K562 (cell line): ENCODE measurements at regions of chr15 and their contacts with region 1.

Region 1: DNA sequence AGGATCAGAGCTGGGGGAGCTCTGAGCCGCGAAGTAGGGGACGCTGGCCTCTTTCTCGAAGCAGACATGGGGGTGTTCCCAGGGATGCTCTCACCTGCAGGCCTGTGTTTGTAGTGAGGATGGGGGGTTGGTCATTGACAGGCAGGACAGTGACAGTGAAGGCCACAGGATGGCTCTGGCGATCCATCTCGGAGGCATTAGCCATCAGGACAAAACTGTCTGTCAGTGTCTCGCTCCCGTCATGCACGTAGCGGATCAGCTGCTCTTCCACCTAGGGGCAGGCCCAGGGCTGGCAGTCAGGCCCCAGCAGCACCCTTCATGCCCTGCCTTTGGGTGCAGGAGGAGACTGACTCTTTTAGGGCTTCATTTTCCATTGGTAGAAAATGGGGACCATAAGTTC is 28.0 kb downstream of the CSPG4 start:
- DNase-seq: peak in 3 of 4 experiments; percentile 11 to 54 (median 17)
- ATAC-seq: peak; percentile 8; the same call in 2 of the 3 replicates
- H3K4me3 ChIP-seq: no peak overlapping the region
- H3K27ac ChIP-seq: no peak overlapping the region
- H3K4me1 ChIP-seq: peaks cover 0 to 34% of the 10 kb centered on the region in 2 experiments; a peak in 3 of 5 replicates
- H3K27me3 ChIP-seq: no peaks in the 10 kb centered on the region
- CTCF ChIP-seq: peak; percentile 39 to 45 (median 44); a peak in 5 of 6 replicates
- EP300 ChIP-seq: no peak
- POLR2A ChIP-seq: no peak
- RAD21 ChIP-seq: peak in 1 of 2 experiments; percentile 47; a peak in 2 of 4 replicates

Region 2: GRCh38 chr15:75508840-75509532 is 175.7 kb before region 1 on chr15:
- CTCF ChIA-PET with region 1: interaction called, 7 read pairs
- POLR2A ChIA-PET with region 1: no interaction called
- in situ Hi-C with region 1: no loop called
- intact Hi-C with region 1: loop called (anchors 2 kb)
- DNase-seq: peak; percentile 26 to 62 (median 36)
- ATAC-seq: peak; percentile 85
- H3K4me3 ChIP-seq: no peak overlapping the region
- H3K27ac ChIP-seq: no peak overlapping the region
- H3K4me1 ChIP-seq: no peaks in the 10 kb centered on the region
- H3K27me3 ChIP-seq: no peaks in the 10 kb centered on the region
- CTCF ChIP-seq: peak; percentile 55 to 78 (median 67); a peak in 5 of 6 replicates
- EP300 ChIP-seq: no peak
- POLR2A ChIP-seq: no peak
- RAD21 ChIP-seq: peak; percentile 62 to 74

Region 3: GRCh38 chr15:75639709-75640482 is 44.7 kb before region 1 on chr15 and contains the start of gene IMP3:
- CTCF ChIA-PET with region 1: interaction called, 10 read pairs
- POLR2A ChIA-PET with region 1: interaction called, 3 read pairs
- in situ Hi-C with region 1: no loop called
- intact Hi-C with region 1: no loop called
- DNase-seq: peak; percentile 97 to 99 (median 98)
- ATAC-seq: peak; percentile 94
- H3K4me3 ChIP-seq: peak within 1 kb of the TSS; percentile 93
- H3K27ac ChIP-seq: peak within 1 kb of the TSS; percentile 86
- H3K4me1 ChIP-seq: peaks cover 18 to 34% of the 10 kb centered on the region in 2 experiments
- H3K27me3 ChIP-seq: no peaks in the 10 kb centered on the region; a peak in 1 of 5 replicates
- CTCF ChIP-seq: no peak
- EP300 ChIP-seq: no peak
- POLR2A ChIP-seq: peak; percentile 98
- RAD21 ChIP-seq: no peak
- polyA plus RNA-seq, gene IMP3: 14.5 to 15.5 TPM

Region 4: DNA sequence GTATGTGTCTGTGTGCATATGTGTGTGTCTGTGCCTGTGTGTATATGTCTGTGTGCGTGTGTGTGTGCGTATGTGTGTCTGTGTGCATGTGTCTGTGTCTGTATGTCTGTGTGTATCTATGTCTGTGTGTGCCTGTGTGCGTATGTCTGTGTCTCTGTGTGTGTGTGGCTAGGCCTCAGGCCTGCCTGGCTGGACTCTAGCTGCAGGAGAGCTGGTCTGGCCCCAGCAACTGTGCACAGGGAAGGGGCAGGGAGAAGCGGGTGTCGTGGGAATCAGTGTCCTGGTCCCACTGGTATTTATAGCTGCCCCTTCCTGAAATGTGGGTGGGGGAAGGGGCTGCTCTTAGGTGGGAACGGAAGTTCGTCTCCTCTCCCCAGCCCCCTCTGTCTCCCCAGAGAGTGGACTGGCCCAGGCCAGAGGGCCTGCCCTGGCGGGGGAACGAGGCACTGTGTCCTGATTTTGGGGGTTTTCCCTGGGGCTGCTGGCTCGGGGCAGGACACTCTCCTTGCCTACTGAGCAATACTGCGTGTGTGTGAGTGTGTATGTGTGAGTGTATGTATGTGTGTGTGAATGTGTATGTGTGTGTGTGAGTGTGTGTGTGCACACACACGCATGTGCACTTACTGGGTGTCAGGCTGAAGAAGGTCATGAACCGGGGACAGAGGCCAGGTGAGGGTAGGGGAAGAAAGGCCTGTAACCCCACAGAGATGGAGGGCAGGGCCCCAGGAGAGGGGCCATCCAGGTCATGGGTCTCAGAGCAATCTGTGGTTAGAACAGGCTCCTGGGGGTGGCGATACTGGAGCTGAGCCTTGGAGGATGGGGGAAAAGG is 21.4 kb after region 1 on chr15:
- CTCF ChIA-PET with region 1: no interaction called
- POLR2A ChIA-PET with region 1: no interaction called
- in situ Hi-C with region 1: no loop called
- intact Hi-C with region 1: no loop called
- DNase-seq: no peak
- ATAC-seq: no peak
- H3K4me3 ChIP-seq: no peak overlapping the region
- H3K27ac ChIP-seq: no peak overlapping the region
- H3K4me1 ChIP-seq: peaks cover 0 to 8% of the 10 kb centered on the region in 2 experiments; a peak in 3 of 5 replicates
- H3K27me3 ChIP-seq: no peaks in the 10 kb centered on the region
- CTCF ChIP-seq: no peak
- EP300 ChIP-seq: no peak
- POLR2A ChIP-seq: no peak
- RAD21 ChIP-seq: no peak

Region 5: GRCh38 chr15:75785771-75786574 is 101.3 kb after region 1 on chr15:
- CTCF ChIA-PET with region 1: no interaction called
- POLR2A ChIA-PET with region 1: no interaction called
- in situ Hi-C with region 1: loop called (anchors 5 kb)
- intact Hi-C with region 1: no loop called
- DNase-seq: peak; percentile 35 to 59 (median 43)
- ATAC-seq: peak; percentile 54; the same call in 1 of the 3 replicates
- H3K4me3 ChIP-seq: no peak overlapping the region
- H3K27ac ChIP-seq: no peak overlapping the region
- H3K4me1 ChIP-seq: peaks cover 0 to 8% of the 10 kb centered on the region in 2 experiments; a peak in 2 of 5 replicates
- H3K27me3 ChIP-seq: peaks cover 12 to 45% of the 10 kb centered on the region in 2 experiments
- CTCF ChIP-seq: peak; percentile 72 to 91 (median 78)
- EP300 ChIP-seq: no peak
- POLR2A ChIP-seq: no peak
- RAD21 ChIP-seq: peak; percentile 61 to 78

Region 6: DNA sequence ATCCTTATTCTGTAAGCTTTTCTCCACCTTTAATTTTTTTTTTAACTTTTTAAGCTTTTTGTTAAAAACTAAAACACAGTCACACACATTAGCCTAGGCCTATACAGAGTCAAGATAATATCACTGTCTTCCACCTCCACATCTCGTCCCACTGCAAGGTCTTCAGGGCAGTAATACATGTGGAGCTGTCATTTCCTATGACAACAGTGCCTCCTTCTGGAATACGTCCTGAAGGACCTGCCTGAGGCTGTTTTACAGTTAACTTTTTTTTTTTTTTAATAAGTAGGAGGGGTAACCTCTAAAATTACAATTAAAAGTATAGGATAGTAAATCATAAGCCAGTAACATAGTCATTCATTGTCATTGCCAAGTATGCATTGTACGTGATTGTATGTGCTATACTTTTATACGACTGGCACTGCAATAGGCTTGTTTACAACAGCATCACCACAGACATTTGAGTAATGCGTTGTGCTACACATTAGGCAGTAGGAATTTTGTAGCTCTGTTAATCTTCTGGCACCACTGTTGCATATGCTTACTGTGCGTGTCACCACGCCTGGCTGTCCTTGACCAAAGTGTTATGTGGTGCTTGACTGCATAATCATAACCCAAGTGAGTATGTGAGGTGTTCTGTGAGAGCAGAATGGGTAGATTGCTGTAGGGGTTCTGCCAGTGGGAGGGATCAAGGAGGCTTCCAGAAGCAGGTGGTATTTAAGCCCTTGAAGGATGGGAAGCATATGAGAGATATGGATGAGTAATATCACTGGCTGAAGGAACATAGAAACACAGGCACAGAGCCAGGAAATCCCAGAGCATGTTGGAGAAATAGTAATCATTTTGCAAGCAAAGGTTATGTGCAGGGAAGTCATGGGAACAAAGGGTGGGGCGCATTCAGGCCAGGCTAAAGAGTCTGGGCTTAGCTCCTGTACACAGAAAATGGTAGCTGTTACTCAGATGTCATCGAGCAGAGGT is 237.4 kb after region 1 on chr15:
- CTCF ChIA-PET with region 1: no interaction called
- POLR2A ChIA-PET with region 1: no interaction called
- in situ Hi-C with region 1: loop called (anchors 5 kb)
- intact Hi-C with region 1: loop called (anchors 10 kb)
- DNase-seq: peak in 2 of 4 experiments; percentile 38 to 84
- ATAC-seq: peak; percentile 99
- H3K4me3 ChIP-seq: no peak overlapping the region
- H3K27ac ChIP-seq: no peak overlapping the region
- H3K4me1 ChIP-seq: no peaks in the 10 kb centered on the region
- H3K27me3 ChIP-seq: no peaks in the 10 kb centered on the region
- CTCF ChIP-seq: peak; percentile 71 to 86 (median 72)
- EP300 ChIP-seq: no peak
- POLR2A ChIP-seq: no peak
- RAD21 ChIP-seq: peak; percentile 86 to 94